ENCODE measurements at regions of chr16 and their contacts with region 1.

Region 1: DNA sequence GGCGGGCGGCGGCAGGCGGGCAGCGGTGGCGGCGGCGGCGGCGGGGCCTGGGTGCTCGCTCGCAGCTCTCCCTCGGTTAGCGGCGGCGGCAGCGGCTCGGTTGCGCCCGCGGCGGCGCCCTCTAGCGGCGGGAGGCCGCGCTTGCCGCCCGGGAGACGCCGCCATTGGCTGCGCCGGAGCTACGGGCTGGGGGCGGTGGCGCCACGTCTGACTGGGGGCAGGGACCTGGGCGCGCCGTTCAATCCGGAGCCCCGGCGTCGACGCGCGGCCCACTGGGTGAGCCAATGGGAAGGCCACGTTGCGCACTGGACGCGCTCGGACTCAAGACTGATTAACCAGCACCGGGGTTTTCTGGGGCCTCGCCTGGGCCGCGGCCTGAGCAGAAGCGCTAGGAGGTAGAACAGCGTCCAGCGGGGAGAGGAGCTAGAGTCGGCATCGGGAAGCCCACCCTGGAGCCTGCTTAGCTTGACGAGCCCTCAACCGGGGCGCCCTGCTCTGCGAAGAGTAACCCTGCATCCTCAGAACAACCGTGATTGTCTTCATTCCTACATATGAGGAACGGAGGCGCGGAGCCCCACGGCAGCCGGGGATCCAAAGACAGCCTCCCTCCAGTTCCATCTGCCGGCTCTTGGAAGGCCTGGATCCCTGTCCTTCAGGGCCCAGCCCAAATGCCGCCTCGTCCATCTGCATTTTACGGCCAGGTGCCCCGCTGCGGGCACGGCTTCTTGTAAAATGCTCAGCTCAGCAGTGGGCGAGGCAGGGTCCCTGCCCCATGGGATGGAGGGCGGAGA is at the start of gene ZC3H7A:
- DNase-seq: peak; percentile 95
- H3K4me3 Mint-ChIP-seq: peak within 1 kb of the TSS; percentile 92
- H3K27ac Mint-ChIP-seq: peak within 1 kb of the TSS; percentile 93
- H3K4me1 Mint-ChIP-seq: peaks cover 72% of the 10 kb centered on the region
- H3K27me3 Mint-ChIP-seq: no peaks in the 10 kb centered on the region
- total RNA-seq, gene ZC3H7A: 123 to 127 TPM

Region 2: DNA sequence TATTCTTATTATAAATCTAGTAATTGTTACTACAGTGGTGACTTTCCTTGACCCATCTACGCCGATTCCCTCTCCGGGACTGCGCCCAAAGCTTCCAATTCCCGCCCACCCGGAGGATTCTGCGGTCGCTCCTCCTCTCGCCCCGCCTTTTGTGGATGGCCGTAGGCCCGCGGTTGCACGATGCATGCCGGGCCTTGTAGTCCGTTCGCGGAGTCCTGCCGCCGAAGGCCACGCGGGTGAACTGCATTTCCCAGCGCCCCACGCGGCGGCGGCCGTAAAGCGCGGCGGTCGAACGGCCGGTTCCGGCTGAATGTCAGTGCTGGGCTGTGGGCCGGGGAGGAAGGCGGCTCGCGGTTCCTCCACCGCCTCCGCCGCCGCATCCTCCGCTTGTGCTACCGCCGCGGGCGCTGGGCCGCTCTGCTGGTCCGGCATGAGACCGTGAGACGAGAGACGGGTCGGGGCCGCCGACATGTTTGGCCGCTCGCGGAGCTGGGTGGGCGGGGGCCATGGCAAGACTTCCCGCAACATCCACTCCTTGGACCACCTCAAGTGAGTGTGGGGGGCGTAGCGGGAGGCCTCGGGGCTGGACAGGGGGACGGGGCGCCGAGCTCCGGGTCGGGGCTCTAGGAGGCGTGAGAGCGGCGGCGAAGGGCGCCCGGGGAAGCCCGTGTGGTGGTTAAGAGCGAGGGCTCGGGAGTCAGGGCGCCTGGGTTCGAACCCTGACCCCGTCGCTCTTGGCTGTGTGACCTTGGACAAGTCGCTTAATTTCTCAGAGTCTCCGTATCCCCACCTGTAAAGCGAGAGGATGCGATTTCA is 852.9 kb before region 1 on chr16 and contains the start of gene CLEC16A:
- CTCF ChIA-PET with region 1: no interaction called
- intact Hi-C with region 1: loop called (anchors 1 kb)
- DNase-seq: peak; percentile 97
- H3K4me3 Mint-ChIP-seq: peak within 1 kb of the TSS; percentile 81
- H3K27ac Mint-ChIP-seq: peak within 1 kb of the TSS; percentile 70
- H3K4me1 Mint-ChIP-seq: peaks cover 61% of the 10 kb centered on the region
- H3K27me3 Mint-ChIP-seq: no peaks in the 10 kb centered on the region
- total RNA-seq, gene CLEC16A: 18.4 to 20.1 TPM

Region 3: DNA sequence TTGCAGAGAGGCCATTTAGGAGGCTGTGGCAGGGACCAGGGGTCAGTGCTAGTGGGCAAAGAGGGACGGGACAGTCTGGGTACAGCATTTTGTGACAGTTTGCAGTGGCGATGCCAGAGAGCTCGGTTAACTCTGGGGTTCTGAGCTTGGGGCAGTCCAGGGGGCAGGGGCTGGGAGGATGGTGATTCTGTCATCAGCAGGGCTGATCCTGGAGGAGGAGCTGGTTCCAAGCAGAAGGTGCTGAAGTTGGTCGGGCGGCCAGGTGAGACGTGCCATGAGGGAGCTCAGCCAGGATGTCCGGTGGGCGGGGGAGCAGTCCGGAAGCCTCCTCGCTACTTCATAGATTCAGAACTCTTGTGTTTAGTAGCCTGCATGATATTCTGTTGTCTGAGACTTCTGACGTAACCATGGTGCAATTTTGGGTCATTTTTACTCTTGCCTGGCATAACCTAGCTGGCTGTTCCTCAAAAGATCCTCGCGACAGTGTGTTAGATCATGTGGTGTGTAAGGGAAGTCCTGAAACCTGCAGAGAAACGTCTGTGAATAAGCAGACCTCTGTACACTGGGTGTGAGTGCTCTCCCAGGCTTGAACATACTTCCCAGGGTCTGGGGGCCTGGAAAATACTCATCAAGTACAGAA is 731.0 kb before region 1 on chr16:
- CTCF ChIA-PET with region 1: no interaction called
- intact Hi-C with region 1: no loop called
- DNase-seq: no peak
- H3K4me3 Mint-ChIP-seq: no peak overlapping the region
- H3K27ac Mint-ChIP-seq: peak overlapping the region; percentile 48
- H3K4me1 Mint-ChIP-seq: no peaks in the 10 kb centered on the region
- H3K27me3 Mint-ChIP-seq: no peaks in the 10 kb centered on the region

Region 4: GRCh38 chr16:11560701-11561449 is 236.5 kb before region 1 on chr16:
- CTCF ChIA-PET with region 1: no interaction called
- intact Hi-C with region 1: loop called (anchors 5 kb)
- DNase-seq: peak; percentile 84
- H3K4me3 Mint-ChIP-seq: peak overlapping the region; percentile 76
- H3K27ac Mint-ChIP-seq: peak overlapping the region; percentile 96
- H3K4me1 Mint-ChIP-seq: peaks cover 82% of the 10 kb centered on the region
- H3K27me3 Mint-ChIP-seq: no peaks in the 10 kb centered on the region

Region 5: DNA sequence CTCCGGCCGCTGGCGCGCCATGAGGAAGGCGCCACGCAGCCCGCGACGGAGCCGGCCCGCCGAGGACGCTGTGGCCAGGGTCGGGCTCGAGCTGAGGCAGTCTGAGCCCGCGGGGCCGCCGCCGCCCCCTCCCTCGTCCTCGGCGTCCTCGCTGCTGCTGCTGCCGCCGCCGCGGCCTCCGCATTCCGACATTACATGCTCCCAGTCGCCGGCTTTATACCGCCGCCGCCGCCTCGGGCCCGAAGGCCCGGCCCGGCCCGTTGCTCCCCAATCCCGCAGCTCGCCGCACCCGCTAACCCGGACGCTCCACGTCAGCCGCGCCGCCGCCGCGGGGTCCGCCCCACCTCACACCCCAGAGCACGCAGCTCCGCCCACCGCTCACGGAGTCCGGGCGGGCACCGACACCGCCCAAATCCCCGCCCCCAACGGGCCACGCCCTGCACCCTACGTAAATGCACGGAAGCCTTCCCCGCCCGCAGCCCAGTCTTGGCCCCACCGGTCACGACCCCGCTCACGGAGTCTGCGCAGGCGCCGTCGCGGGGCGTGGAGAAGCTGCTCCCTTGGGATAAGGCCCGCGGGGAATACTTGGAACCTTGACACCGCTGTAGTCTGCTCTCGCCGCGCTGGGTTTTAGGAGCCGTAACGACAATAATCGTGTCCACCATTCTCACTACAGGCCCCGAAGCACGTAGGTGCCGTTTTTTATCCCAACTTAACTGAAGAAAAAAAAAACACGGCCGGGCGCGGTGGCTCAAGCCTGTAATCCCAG is 54.6 kb before region 1 on chr16 and contains the start of gene TXNDC11:
- CTCF ChIA-PET with region 1: interaction called, 25 read pairs
- intact Hi-C with region 1: loop called (anchors 1 kb)
- DNase-seq: peak; percentile 99
- H3K4me3 Mint-ChIP-seq: peak within 1 kb of the TSS; percentile 91
- H3K27ac Mint-ChIP-seq: peak within 1 kb of the TSS; percentile 96
- H3K4me1 Mint-ChIP-seq: peaks cover 48% of the 10 kb centered on the region
- H3K27me3 Mint-ChIP-seq: no peaks in the 10 kb centered on the region
- total RNA-seq, gene TXNDC11: 24.6 to 25.5 TPM

Region 6: GRCh38 chr16:11851294-11852091 is 54.1 kb after region 1 on chr16 and contains the start of gene RSL1D1:
- CTCF ChIA-PET with region 1: interaction called, 4 read pairs
- intact Hi-C with region 1: loop called (anchors 1 kb)
- DNase-seq: peak; percentile 93
- H3K4me3 Mint-ChIP-seq: peak within 1 kb of the TSS; percentile 98
- H3K27ac Mint-ChIP-seq: peak within 1 kb of the TSS; percentile 90
- H3K4me1 Mint-ChIP-seq: peaks cover 61% of the 10 kb centered on the region
- H3K27me3 Mint-ChIP-seq: no peaks in the 10 kb centered on the region
- total RNA-seq, gene RSL1D1: 354 to 365 TPM